T-cell (primary cell): ENCODE measurements at regions of chr5 and their contacts with region 1.

Region 1: DNA sequence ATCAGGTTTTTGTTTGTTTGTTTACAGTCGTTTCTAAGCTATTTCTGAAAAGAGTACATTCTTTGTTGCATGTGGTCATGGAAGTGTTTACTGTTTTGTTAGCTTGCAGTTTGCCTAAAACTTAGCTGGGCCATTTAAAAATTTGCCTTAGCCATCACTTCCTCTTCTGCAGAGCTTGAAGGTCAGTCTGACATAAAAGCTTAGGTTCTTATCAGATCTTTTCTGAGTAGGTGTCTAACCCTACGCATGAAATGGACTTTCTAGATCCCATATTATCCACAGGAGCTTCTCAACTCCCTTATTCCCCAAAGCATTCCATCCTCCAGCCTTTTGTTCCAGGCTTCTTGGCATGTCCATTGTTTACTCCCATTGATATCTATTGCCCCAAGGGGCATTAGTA is 90.3 kb downstream of the AP3B1 start:
- DNase-seq: no peak
- ATAC-seq: no peak
- H3K4me3 ChIP-seq: no peak overlapping the region
- H3K4me3 Mint-ChIP-seq: no peak overlapping the region
- H3K27ac ChIP-seq: no peak overlapping the region
- H3K27ac Mint-ChIP-seq: no peak overlapping the region
- H3K4me1 ChIP-seq: no peaks in the 10 kb centered on the region
- H3K4me1 Mint-ChIP-seq: peaks cover 0 to 2% (median 0%) of the 10 kb centered on the region in 3 donors
- H3K27me3 ChIP-seq: no peaks in the 10 kb centered on the region
- H3K27me3 Mint-ChIP-seq: no peaks in the 10 kb centered on the region

Region 2: DNA sequence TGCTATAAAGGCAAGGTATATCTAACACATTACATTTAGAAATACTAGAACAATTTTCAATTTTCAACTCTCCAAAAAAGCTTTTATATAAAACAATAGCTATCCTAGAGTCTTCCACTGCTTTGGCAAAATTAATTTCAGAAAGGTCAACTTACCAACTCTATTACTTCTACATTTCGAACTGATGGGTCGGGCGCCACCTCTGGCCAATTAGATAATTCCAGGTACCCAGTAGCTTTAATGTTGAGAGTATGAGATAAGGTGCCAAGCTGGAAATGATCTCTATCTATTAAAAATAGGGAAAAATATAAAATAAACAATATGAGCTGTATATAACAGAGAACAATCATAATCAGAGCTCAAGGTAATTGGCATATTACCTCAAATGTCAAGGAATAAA is 76.4 kb before region 1 on chr5:
- CTCF ChIA-PET with region 1: interaction called in 1 of 2 experiments, 10 read pairs
- POLR2A ChIA-PET with region 1: no interaction called
- DNase-seq: no peak
- ATAC-seq: no peak
- H3K4me3 ChIP-seq: no peak overlapping the region
- H3K4me3 Mint-ChIP-seq: no peak overlapping the region
- H3K27ac ChIP-seq: no peak overlapping the region
- H3K27ac Mint-ChIP-seq: no peak overlapping the region
- H3K4me1 ChIP-seq: no peaks in the 10 kb centered on the region
- H3K4me1 Mint-ChIP-seq: no peaks in the 10 kb centered on the region
- H3K27me3 ChIP-seq: no peaks in the 10 kb centered on the region
- H3K27me3 Mint-ChIP-seq: no peaks in the 10 kb centered on the region

Region 3: DNA sequence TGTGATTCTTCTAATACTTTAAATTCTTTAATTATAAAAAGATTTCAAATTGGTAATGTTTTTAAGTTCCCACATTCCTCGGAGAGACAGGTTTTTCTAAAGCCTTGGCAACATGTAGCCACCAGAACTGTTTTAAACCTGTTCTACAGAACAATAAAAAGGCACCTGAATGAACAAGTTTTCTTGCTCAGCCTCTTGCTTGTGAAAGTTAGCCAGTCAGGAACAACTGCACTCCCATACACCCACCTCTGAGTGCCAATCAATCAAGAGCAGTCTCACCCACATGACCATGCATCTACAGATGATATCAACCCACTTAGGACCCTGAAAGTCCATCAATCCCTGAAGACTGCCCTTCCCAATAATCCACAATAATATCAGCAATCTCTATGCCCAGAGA is 27.9 kb after region 1 on chr5:
- CTCF ChIA-PET with region 1: no interaction called
- POLR2A ChIA-PET with region 1: no interaction called
- DNase-seq: no peak
- ATAC-seq: no peak
- H3K4me3 ChIP-seq: no peak overlapping the region
- H3K4me3 Mint-ChIP-seq: no peak overlapping the region
- H3K27ac ChIP-seq: no peak overlapping the region
- H3K27ac Mint-ChIP-seq: no peak overlapping the region
- H3K4me1 ChIP-seq: no peaks in the 10 kb centered on the region
- H3K4me1 Mint-ChIP-seq: peaks cover 0 to 23% (median 23%) of the 10 kb centered on the region in 3 donors
- H3K27me3 ChIP-seq: no peaks in the 10 kb centered on the region
- H3K27me3 Mint-ChIP-seq: no peaks in the 10 kb centered on the region